Pancreas (tissue), 10 donors: ENCODE measurements at regions of chr18 and their contacts with region 1.

Region 1: DNA sequence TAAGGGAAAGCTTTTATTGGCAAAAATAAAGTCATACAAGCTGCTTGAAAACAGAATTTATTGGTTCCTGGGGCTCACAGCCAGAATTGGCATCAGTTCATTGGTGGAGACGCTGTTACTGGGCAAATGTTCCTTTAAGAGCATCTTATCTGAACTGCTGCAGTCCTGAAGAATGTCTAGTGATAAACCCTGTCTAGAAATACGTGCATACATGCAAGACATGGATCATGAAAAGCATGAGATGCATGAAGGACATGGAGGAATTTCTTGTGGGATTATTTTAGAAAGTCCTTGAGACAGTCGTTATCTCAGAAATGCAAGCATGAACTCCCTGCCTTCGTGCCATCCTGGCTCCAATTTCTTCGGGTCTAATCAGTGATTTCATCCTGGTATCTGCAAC is 32.5 kb upstream of the FHOD3 start:
- DNase-seq: no peak
- ATAC-seq: no peak
- H3K4me3 ChIP-seq: no peak overlapping the region
- H3K27ac ChIP-seq: no peak overlapping the region
- H3K4me1 ChIP-seq: no peaks in the 10 kb centered on the region
- H3K27me3 ChIP-seq: no peaks in the 10 kb centered on the region
- CTCF ChIP-seq: no peak

Region 2: DNA sequence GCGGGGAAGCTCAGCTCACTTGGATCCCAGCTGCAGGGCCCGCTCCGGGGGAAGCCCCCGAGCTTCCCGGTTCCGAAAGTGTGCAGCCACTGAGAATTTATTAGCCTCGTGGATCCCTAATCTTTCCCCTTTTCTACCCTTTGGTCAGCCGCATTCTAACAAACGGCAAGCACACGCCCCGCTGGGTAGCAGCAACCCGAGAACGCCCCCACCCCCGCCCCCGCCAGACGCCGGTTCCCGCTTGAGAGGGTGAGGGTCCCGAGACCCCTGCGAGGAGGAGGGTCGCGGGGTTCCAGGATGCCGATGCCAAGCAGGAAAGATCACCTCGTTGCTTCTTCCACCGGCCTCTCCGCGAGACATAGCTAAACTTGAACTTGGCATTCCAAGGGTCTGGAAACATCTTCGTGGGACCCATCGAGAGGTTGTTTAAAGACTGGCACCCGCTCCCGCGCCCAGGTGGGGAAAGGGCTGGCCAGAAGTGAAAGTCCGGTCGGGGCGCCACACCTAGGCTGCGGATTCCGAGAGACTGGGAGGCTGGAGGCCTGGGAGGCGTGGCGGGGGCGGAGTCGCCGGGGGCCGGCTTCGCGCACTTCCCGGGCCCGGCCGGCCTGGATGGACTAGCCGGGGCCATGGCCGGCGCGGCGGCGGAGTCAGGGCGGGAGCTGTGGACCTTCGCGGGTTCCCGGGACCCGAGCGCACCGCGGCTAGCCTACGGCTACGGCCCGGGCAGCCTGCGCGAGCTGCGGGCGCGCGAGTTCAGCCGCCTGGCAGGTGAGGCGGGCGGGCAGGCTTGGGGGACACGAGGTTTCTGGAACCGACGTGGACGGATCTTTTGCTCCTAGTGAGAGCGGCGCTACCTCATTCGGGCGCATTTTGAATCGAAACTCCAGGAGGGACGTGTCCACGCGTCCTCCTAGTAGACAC is 77.8 kb before region 1 on chr18 and contains the start of gene MOCOS:
- intact Hi-C with region 1: loop called in 1 of 3 experiments (anchors 10 kb)
- DNase-seq: peak; percentile 82 to 95 (median 86)
- ATAC-seq: peak; percentile 98 to 99 (median 98)
- H3K4me3 ChIP-seq: peak within 1 kb of the TSS; percentile 64 to 83 (median 76)
- H3K27ac ChIP-seq: peak within 1 kb of the TSS in 1 of 4 donors; percentile 15
- H3K4me1 ChIP-seq: peaks cover 0 to 4% (median 0%) of the 10 kb centered on the region in 3 donors
- H3K27me3 ChIP-seq: no peaks in the 10 kb centered on the region
- CTCF ChIP-seq: no peak
- total RNA-seq, gene MOCOS: 0.75 to 1.6 (median 1.1) TPM